ENCODE measurements at regions of chr9 and their contacts with region 1.

Region 1: DNA sequence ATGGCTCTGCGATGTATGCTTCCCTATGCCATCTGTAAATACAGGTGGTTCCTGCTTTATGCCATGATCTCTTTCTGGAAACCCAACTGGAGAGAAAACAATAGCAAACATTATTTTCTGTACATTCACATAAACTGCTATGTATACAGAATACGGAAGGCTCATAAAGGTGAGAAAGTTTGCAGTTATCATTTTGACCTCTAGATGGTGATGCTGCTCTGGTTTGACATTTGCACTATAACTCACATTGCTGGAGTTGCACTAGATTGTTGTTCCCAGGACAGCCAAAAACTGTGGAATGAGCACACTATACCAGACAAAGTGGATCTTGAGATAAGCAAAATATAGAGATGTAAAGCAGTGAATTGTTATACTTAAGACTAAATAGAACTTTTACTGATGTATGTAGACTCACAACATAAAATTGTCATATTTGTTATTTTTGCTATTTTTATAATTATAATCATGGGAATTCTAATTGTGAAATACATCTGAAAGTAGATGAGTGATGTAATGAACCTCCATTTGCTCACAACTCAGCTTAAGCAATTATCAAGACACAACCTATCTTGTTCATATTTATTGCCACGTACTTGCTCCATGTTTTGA is 246.5 kb downstream of the PTPRD start:
- DNase-seq: peak; percentile 66
- ATAC-seq: peak; percentile 69
- H3K4me3 ChIP-seq: no peak overlapping the region
- H3K27ac ChIP-seq: no peak overlapping the region
- H3K4me1 ChIP-seq: no peaks in the 10 kb centered on the region
- H3K27me3 ChIP-seq: no peaks in the 10 kb centered on the region
- CTCF ChIP-seq: peak; percentile 69

Region 2: GRCh38 chr9:10744669-10745068 is 378.4 kb after region 1 on chr9:
- CTCF ChIA-PET with region 1: no interaction called
- POLR2A ChIA-PET with region 1: no interaction called
- intact Hi-C with region 1: loop called (anchors 5 kb)
- DNase-seq: no peak
- ATAC-seq: no peak
- H3K4me3 ChIP-seq: no peak overlapping the region
- H3K27ac ChIP-seq: no peak overlapping the region
- H3K4me1 ChIP-seq: no peaks in the 10 kb centered on the region
- H3K27me3 ChIP-seq: no peaks in the 10 kb centered on the region
- CTCF ChIP-seq: no peak

Region 3: DNA sequence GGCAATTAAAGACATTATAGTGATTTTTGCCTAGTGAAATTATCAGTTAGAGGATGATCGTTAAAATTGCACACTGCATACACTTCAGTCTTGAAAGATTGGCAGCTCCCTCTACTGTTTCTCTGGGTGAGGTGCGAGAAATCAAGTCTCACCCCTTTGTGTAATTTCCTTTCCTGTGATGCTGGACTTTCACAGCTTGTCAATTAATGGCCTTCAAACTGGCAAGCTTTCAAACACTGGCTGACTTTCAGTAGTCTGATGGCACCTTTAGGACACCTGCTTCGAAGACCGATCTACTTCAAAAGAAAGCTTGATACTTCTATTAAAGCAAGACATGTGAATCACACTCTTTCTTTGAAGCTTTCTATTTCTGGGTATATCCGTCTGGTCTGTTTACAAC is 953.3 kb after region 1 on chr9:
- CTCF ChIA-PET with region 1: no interaction called
- POLR2A ChIA-PET with region 1: no interaction called
- intact Hi-C with region 1: loop called (anchors 5 kb)
- DNase-seq: peak; percentile 33
- ATAC-seq: peak; percentile 85
- H3K4me3 ChIP-seq: no peak overlapping the region
- H3K27ac ChIP-seq: no peak overlapping the region
- H3K4me1 ChIP-seq: no peaks in the 10 kb centered on the region; the same call in 1 of the 2 replicates
- H3K27me3 ChIP-seq: no peaks in the 10 kb centered on the region
- CTCF ChIP-seq: peak; percentile 60

Region 4: GRCh38 chr9:12329623-12329985 is 1963.3 kb after region 1 on chr9:
- CTCF ChIA-PET with region 1: no interaction called
- POLR2A ChIA-PET with region 1: no interaction called
- intact Hi-C with region 1: loop called (anchors 1 kb)
- DNase-seq: no peak
- ATAC-seq: no peak
- H3K4me3 ChIP-seq: no peak overlapping the region
- H3K27ac ChIP-seq: no peak overlapping the region
- H3K4me1 ChIP-seq: no peaks in the 10 kb centered on the region
- H3K27me3 ChIP-seq: no peaks in the 10 kb centered on the region
- CTCF ChIP-seq: no peak

Measured in PC-3 (cell line).